ENCODE measurements at regions of chr2 and their contacts with region 1.

Region 1: GRCh38 chr2:85888684-85889626 is at the start of gene ST3GAL5:
- DNase-seq: peak; percentile 51
- ATAC-seq: peak; percentile 87
- H3K4me3 ChIP-seq: peak within 1 kb of the TSS; percentile 65
- H3K27ac ChIP-seq: peak within 1 kb of the TSS; percentile 4; the same call in 1 of the 2 replicates
- H3K4me1 ChIP-seq: peaks cover 13% of the 10 kb centered on the region; the same call in 1 of the 2 replicates
- H3K27me3 ChIP-seq: no peaks in the 10 kb centered on the region; a peak in 1 of 4 replicates
- CTCF ChIP-seq: peak; percentile 79 to 84 (median 81)
- EP300 ChIP-seq: peak; percentile 28 to 57; a peak in 1 of 4 replicates
- POLR2A ChIP-seq: peak; percentile 39; the same call in 1 of the 2 replicates
- RAD21 ChIP-seq: peak; percentile 71
- polyA plus RNA-seq, gene ST3GAL5: 5.6 to 7.5 TPM

Region 2: GRCh38 chr2:85819811-85820510 is 69.0 kb before region 1 on chr2:
- CTCF ChIA-PET with region 1: interaction called, 10 read pairs
- POLR2A ChIA-PET with region 1: no interaction called
- RAD21 ChIA-PET with region 1: interaction called, 259 read pairs
- SMC1A ChIA-PET with region 1: interaction called, 8 read pairs
- in situ Hi-C with region 1: loop called (anchors 5 kb)
- intact Hi-C with region 1: no loop called
- DNase-seq: no peak
- ATAC-seq: no peak; the same call in 2 of the 3 replicates
- H3K4me3 ChIP-seq: no peak overlapping the region
- H3K27ac ChIP-seq: no peak overlapping the region
- H3K4me1 ChIP-seq: no peaks in the 10 kb centered on the region
- H3K27me3 ChIP-seq: no peaks in the 10 kb centered on the region
- CTCF ChIP-seq: no peak
- EP300 ChIP-seq: no peak
- POLR2A ChIP-seq: no peak
- RAD21 ChIP-seq: no peak

Region 3: DNA sequence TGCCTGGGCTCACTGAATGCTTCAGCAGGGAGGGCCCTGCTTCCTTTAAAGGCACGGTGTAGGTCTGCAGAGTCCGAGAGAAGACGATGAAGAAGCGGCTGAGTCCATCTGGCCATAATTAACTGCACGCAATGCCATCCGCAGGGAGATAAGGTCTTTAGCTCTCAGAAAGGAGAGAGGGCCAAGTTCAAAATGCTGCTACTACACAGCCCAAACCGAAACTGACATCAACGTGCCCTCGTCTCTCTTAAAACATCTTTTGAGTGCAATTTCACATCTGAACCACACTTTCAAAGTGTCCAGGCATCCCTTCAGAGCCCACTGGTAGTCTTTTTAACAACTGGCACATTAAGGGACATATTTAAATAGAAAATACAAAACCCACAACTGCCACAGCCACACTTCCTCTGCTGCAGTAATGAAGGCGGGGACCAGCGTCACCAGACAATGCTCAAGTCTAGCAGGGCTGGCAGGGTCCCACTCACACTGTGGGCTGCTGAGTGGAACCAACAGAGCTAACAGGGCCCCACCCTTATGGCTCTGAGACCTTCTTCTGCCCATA is 35.9 kb before region 1 on chr2:
- CTCF ChIA-PET with region 1: interaction called, 58 read pairs
- POLR2A ChIA-PET with region 1: interaction called, 13 read pairs
- RAD21 ChIA-PET with region 1: interaction called, 99 read pairs
- SMC1A ChIA-PET with region 1: interaction called, 115 read pairs
- in situ Hi-C with region 1: no loop called
- intact Hi-C with region 1: loop called (anchors 1 kb)
- DNase-seq: peak; percentile 88
- ATAC-seq: peak; percentile 84
- H3K4me3 ChIP-seq: peak overlapping the region; percentile 51; the same call in 1 of the 2 replicates
- H3K27ac ChIP-seq: peak overlapping the region; percentile 84
- H3K4me1 ChIP-seq: peaks cover 49% of the 10 kb centered on the region
- H3K27me3 ChIP-seq: no peaks in the 10 kb centered on the region
- CTCF ChIP-seq: no peak
- EP300 ChIP-seq: peak; percentile 5 to 51; a peak in 1 of 4 replicates
- POLR2A ChIP-seq: peak; percentile 57; the same call in 1 of the 2 replicates
- RAD21 ChIP-seq: no peak

Region 4: GRCh38 chr2:85878719-85879385 is 10.1 kb before region 1 on chr2:
- CTCF ChIA-PET with region 1: interaction called, 11 read pairs
- POLR2A ChIA-PET with region 1: interaction called, 7 read pairs
- RAD21 ChIA-PET with region 1: interaction called, 5 read pairs
- SMC1A ChIA-PET with region 1: interaction called, 18 read pairs
- in situ Hi-C with region 1: no loop called
- intact Hi-C with region 1: no loop called
- DNase-seq: no peak
- ATAC-seq: peak; percentile 34; the same call in 2 of the 3 replicates
- H3K4me3 ChIP-seq: no peak overlapping the region
- H3K27ac ChIP-seq: no peak overlapping the region
- H3K4me1 ChIP-seq: no peaks in the 10 kb centered on the region
- H3K27me3 ChIP-seq: peaks cover 0 to 4% of the 10 kb centered on the region in 2 experiments; a peak in 1 of 4 replicates
- CTCF ChIP-seq: no peak
- EP300 ChIP-seq: no peak
- POLR2A ChIP-seq: no peak
- RAD21 ChIP-seq: no peak

Region 5: DNA sequence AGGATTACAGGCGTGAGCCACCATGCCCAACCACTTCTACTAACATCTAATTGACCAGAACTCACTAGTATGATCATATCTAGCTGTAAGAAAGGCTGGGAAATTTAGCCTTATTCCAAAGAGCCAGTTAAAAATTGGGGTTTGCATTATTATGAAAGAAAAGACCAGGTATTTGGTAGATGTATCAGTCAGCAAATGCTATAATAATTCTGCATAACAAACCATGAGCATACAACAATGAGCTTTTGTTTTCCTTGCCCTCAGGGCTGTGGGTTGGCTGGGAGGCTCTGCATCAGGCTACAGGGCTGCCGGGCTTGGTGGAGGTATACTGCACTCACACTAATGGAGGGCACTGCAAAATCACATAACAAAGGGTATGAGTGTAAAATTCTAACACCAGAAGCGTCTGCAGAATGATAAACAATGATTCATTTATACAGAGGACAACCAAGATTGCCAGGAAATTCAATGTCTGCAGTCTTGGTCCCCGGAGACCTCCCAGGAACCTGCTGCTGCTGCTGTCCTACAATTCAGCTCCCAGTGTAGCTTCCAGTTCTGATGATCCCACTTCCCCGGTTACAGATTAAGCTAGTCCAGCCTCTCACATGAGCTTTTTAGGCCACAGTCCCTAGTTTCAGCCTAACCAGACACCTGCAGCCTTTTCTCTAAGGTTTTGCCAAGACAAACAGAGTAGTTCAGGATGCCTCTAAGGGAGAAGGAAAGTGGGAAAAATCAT is 32.0 kb after region 1 on chr2:
- CTCF ChIA-PET with region 1: interaction called, 8 read pairs
- POLR2A ChIA-PET with region 1: interaction called, 3 read pairs
- RAD21 ChIA-PET with region 1: interaction called, 8 read pairs
- SMC1A ChIA-PET with region 1: interaction called, 17 read pairs
- in situ Hi-C with region 1: no loop called
- intact Hi-C with region 1: no loop called
- DNase-seq: no peak
- ATAC-seq: no peak
- H3K4me3 ChIP-seq: no peak overlapping the region
- H3K27ac ChIP-seq: no peak overlapping the region
- H3K4me1 ChIP-seq: peaks cover 9% of the 10 kb centered on the region
- H3K27me3 ChIP-seq: no peaks in the 10 kb centered on the region
- CTCF ChIP-seq: no peak
- EP300 ChIP-seq: no peak
- POLR2A ChIP-seq: no peak
- RAD21 ChIP-seq: no peak

Region 6: DNA sequence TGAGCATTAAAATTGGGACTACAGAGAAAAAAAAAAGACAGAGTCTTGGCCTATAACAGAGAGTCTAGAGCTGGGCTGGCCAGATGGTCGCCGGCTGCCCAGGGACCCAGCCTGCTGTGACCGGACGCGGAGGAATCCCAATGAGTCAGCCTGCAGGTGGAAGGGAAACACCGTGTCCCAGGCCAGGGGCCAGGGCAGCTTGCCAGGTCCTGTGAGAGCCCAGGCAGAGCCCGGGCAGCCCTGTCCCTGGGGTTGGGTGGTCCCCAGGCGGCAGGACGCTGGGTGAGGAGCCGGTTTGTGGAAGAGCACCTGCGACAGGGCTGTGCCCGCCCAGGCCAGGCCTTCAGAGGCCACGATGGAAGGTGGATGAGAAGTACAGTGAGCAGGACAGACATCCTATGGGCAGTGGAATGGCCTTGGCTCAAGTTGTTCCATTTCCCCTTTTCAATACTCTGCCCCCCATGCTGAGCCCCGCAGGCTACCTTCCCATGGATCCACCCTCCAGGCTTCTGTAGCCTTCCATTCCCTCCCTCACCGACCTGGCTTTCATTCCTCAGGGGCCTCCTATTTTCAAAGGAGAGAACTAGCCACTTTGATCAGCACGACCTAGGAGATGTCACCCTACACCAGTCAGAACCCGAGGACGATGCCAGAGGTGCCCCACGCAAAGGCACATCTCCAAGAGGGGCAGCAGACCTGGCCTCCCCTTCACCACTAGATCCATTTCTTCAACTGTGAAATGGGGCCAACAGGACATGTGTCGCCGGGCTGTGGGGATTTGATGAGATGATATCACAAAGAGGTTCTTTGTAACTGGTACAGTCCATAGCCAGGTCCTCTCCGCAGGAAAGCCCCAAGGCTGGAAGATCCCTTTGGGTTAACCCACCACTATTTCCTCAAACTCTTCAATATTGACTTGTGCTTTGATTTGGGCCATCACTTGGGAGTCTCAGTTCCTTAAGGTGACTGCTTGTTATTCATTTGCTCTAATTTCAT is 129.2 kb after region 1 on chr2:
- CTCF ChIA-PET with region 1: interaction called, 20 read pairs
- POLR2A ChIA-PET with region 1: interaction called, 10 read pairs
- RAD21 ChIA-PET with region 1: interaction called, 27 read pairs
- SMC1A ChIA-PET with region 1: interaction called, 21 read pairs
- in situ Hi-C with region 1: no loop called
- intact Hi-C with region 1: loop called (anchors 5 kb)
- DNase-seq: no peak
- ATAC-seq: peak; percentile 71
- H3K4me3 ChIP-seq: no peak overlapping the region
- H3K27ac ChIP-seq: peak overlapping the region; percentile 60
- H3K4me1 ChIP-seq: peaks cover 20% of the 10 kb centered on the region
- H3K27me3 ChIP-seq: no peaks in the 10 kb centered on the region
- CTCF ChIP-seq: no peak
- EP300 ChIP-seq: peak; percentile 22 to 68; a peak in 1 of 4 replicates
- POLR2A ChIP-seq: no peak
- RAD21 ChIP-seq: no peak

Measured in GM12878 (cell line).